Heart right ventricle (tissue), 16 donors: ENCODE measurements at regions of chr6 and their contacts with region 1.

Region 1: DNA sequence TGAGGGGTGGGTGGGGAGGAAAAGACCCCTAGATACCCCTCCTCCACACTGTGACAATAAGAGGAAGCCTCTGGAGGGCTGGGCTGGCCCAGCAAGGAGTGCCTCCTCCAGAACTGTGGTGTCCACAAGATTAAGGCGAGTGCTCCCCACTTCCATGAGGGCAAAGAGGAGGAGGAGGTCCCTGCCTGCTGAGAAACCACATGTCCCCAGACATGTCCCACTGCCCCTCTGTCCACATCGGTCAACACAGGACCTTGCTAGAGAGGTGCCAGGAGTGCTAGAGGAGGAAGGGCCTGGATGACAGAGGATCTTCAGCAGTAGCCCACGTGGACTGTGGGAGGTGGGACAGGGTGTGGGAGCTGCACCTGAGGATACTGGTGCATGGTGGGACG is 3.1 kb downstream of the RAET1G start:
- DNase-seq: no peak
- ATAC-seq: no peak
- H3K4me3 ChIP-seq: no peak overlapping the region
- H3K27ac ChIP-seq: no peak overlapping the region
- H3K4me1 ChIP-seq: peaks cover 3 to 20% (median 13%) of the 10 kb centered on the region in 9 donors
- H3K27me3 ChIP-seq: peaks cover 0 to 37% (median 0%) of the 10 kb centered on the region in 7 donors
- CTCF ChIP-seq: no peak

Region 2: DNA sequence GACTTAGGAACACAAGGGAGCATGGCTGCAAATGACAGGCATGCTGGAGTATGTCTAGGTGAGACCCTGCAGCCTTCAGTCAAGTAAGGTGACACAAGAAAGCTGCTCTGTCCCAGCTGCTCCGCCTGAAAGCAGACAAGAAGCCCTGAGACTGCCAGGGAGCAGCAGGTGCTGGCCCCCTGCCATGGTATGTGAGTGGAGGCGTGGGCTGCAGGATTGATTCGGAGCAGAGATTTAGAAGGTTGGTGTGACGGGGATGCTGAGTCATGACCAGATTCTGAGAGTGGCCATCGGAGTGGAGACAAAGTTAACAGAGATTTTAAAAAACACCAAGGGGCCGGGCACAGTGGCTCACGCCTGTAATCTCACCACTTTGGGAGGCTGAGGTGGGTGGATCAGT is 73.5 kb before region 1 on chr6:
- intact Hi-C with region 1: loop called in 1 of 10 experiments (anchors 2 kb)
- DNase-seq: no peak
- ATAC-seq: peak in 1 of 8 donors; percentile 18
- H3K4me3 ChIP-seq: no peak overlapping the region
- H3K27ac ChIP-seq: no peak overlapping the region
- H3K4me1 ChIP-seq: peaks cover 0 to 21% (median 10%) of the 10 kb centered on the region in 9 donors
- H3K27me3 ChIP-seq: no peaks in the 10 kb centered on the region
- CTCF ChIP-seq: no peak

Region 3: DNA sequence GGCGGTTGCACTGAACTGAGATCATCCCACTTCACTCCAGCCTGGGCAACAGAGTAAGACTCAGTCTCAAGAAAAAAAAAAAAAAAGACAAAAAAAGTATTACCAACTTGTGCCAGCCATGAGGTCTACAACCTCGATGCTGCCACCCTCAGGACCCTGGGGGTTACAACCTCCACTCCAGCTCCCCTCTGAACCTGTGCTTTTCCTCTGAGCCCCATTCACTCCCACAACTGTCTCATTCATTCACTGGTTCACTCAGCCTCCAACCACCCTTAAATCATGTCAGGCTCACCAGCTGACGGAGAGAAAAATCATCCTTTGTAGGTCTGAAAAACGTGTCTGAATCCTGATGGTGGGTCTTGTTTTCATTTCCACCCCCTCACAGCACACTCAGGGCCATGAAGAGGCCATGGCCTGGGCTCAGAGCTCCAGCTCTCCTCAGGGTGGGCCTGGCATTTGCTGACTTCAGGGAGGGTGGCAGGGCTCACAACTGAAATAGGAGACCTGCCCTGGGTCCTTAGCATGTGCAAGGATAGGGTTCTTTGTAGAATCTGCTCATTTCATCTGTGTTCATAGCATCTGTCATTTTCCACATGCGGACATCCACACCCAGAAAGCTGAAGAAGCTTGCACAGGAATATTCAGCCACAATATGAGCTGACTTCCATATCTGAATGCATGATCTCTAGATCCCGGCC is 42.0 kb after region 1 on chr6:
- intact Hi-C with region 1: no loop called
- DNase-seq: no peak
- ATAC-seq: no peak
- H3K4me3 ChIP-seq: no peak overlapping the region
- H3K27ac ChIP-seq: no peak overlapping the region
- H3K4me1 ChIP-seq: peaks cover 0 to 31% (median 25%) of the 10 kb centered on the region in 9 donors
- H3K27me3 ChIP-seq: peaks cover 19 to 94% (median 77%) of the 10 kb centered on the region in 7 donors
- CTCF ChIP-seq: peak in 2 of 9 donors; percentile 20 to 33